ENCODE measurements at regions of chr7 and their contacts with region 1.

Region 1: DNA sequence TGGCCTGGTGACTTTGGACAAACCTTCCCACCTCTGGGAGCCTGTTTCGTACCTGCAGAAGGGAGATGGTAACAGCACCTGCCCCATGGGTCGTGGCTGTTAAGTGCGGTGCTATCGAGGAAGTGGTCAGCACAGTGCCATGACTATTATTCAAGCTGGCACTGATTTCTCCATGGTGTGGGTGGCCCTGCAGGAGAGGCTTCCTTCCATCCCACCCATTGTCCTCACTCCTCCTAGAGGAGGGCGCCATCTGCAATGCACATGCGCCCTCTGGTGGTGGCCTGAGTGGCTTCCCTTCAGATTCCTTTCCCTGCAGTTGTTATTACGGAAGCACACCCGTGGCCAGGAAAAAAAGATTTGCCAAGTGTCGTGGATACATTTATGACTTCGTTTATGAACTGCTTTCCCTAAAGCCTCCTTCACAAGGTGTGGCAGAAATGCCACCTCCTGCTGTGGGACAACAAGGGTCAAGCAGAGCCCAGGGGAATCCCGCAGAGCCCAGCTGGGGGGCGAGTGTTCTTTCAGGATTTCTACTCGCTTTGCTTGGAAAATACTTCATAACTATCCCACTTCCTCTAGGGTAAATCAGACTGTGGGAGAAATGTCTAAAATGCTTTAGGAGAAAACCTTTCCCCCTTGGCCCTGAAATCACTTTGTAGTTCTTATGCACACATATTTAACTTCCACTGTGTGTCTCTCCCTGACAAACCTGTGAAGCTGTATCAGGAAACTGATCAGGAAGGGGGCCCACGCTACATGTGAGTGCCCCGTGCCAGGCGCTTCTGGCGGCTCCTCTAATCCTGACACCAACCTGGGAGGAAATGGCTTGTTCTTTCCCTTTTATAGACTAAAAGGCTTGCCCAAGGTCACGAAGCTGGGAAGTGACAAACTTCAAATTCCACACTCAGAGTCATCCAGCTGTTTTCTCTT is 98.0 kb upstream of the ANLN start:
- DNase-seq: peak; percentile 73
- CTCF ChIP-seq: peak; percentile 95

Region 2: DNA sequence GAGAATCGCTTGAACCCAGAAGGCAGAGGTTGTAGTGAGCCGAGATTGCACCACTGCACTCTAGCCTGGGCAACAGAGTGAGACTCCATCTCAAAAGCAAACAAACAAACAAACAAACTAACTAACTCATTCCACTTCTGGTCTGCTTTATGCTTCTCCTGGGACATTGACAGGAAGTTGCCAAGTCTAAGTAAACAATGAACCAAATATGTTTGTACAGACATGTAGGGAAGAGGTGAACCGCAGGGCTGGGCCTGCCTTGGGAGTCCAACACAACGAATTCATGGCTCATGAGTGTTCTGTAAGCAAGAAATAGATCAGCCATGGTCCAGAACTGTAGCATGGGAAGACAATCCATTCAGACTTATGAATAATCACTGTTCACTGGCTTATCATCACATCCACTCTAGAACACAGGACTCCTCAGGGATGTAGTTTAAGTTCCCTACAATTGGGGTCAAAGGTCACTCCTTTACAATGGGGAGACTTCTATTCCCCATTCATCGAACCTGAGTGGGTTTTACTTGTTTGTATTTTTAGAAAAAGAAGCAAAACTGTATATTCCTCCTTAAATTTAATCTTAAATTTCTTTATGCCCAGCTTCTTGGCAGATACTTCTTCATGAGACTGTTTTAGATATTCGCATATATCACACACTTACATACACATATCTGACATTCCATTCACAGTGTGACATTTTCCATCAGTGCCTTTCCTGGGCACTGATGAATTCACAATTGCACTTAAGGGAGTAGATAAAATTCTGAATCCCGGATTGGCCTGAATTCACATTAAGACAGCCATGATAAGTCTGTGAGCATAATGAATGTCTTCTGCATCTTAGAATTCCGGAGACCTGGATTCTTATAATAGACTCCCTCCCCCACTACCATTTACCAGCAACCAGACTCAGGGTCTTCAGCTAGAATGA is 297.7 kb before region 1 on chr7:
- in situ Hi-C with region 1: loop called (anchors 10 kb)
- DNase-seq: no peak
- CTCF ChIP-seq: no peak

Measured in GM13977 (cell line).